BJ (cell line): ENCODE measurements at regions of chr21 and their contacts with region 1.

Region 1: DNA sequence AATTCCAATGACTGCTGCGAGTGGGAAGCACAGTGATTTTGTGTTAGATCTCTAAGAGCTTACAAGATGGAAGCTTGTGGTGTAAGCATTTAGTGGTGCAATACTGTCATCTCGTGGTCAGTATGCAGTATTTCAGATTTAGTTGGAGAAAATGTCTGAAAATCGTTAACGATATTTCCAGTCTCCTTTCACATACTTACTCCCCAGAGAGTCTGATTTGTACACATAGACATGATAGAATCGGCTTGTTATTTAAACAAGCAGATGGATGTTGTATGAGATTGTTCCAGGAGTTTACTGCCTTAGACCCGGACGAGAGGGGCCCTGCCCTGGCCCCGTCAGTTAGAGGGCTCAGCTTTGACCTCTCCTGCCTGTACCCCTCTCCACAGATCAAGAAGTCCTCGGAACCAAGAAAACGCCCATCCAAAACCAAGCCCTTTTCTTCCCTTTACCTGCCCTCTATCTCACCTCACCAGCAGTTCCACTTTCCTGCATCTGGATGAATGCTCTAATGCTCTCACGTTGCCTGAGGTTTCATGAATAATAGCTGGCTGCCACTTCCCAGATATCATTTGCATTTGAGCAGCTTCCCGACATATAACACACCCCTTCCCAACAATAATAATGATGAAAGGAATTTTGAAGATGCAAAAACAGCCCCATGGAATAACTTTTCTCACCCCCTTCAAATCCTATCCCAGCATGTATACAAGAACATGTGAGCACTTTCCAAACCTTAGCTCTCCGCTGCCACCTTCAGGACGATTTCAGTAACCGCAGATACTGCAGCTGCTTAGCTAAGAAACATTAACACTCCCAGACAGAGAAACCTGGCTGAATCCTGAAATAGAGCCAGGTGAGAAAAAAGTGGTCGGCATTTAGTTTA is 247.3 kb downstream of the LTN1 start:
- DNase-seq: peak; percentile 45
- H3K4me3 ChIP-seq: peak overlapping the region; percentile 24
- H3K27me3 ChIP-seq: no peaks in the 10 kb centered on the region
- CTCF ChIP-seq: peak; percentile 83

Region 2: DNA sequence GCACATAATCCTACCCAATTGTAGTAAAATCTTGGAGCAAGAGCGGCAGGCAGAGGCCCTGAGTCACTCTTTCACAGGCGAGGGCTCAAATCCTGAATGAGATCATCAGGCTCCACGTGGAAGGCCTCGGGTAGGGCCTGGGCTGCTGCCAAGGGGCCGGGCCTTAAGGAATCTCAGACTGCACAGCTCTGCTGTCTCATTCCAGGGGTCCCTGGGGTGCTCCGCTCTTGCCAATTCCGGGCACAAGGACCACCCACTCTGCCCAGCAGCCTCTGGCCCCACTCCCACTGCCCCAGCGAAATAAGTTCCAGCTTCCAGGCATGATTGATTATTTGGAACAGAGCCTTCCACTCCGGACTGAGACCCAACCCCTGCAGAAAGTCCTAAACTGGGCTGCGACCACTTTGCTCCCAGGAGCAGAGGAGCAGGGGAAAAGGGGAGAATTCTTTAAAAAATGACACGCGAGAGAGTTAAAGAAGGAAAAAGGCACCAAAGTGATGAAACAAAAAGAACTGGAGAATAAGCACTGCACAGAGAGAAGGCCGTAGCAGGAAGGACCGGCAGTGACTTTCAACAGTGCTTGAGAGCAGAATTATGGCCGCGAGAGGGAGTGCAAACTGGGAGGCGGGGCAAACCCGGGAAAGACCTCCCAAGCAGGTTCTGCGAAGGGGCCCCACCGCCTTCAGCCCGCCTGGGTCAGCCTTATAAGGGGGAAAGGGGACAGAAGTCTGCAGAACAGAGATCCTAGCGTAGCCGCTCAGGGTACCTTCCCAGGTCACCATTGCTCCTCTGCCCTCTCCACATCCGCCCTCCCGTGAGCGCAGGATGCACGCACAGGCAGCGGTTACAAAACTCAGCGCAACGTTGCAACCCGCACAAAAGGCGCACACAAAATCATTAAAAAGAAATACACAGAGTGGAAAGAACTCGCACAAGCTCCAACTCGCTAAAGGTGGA is 1902.1 kb before region 1 on chr21:
- CTCF ChIA-PET with region 1: interaction called, 30 read pairs
- POLR2A ChIA-PET with region 1: interaction called, 3 read pairs
- DNase-seq: peak; percentile 70
- H3K4me3 ChIP-seq: peak overlapping the region; percentile 96
- H3K27me3 ChIP-seq: no peaks in the 10 kb centered on the region
- CTCF ChIP-seq: no peak; the same call in 1 of the 2 replicates

Region 3: DNA sequence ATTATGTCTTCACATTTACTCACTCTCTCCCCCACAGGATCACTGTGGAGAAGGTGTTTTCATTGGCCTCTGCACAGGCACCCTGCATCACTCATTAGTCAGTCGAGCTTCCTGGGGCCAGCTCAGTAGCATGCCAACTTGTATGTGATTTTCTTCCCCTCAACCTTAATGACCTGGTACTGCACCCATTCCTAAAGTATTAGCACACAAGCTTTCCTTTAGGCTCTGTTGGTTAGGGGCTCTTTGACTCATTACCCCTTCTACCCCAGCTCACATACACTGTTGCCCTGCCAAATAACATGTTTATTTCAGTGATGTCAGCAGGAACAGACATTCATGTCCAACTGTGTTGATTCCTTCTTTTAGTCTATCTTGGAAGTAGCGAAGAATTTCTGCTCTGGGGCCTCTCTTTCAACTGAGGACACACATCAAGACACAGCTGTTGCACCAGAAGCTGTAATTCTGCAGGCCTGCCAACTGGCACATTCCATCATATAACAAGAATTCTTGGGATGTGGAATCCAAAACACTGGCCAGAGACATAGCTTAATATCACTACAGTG is 1175.0 kb before region 1 on chr21:
- CTCF ChIA-PET with region 1: interaction called, 19 read pairs
- POLR2A ChIA-PET with region 1: no interaction called
- DNase-seq: peak; percentile 76
- H3K4me3 ChIP-seq: no peak overlapping the region
- H3K27me3 ChIP-seq: no peaks in the 10 kb centered on the region
- CTCF ChIP-seq: no peak

Region 4: DNA sequence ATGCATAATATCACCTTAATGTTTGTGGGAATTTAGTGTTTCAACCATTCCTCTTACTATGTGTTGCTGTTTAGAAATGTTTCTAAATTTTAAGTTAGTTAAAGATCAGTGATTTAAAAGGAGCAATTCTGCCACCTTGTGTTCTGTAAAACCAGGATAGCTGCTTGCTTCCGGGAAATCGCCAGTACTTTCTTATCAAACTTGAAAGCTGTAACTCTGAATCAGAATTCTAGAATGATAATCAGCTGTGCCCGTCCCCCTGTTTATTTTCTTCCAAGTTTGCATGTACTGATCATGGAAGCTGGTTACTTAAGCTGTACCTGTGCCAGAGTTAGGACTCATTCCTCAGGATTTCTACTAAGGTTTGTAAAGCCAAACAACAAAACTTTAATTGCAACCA is 409.1 kb before region 1 on chr21:
- CTCF ChIA-PET with region 1: interaction called, 26 read pairs
- POLR2A ChIA-PET with region 1: no interaction called
- DNase-seq: peak; percentile 55
- H3K4me3 ChIP-seq: no peak overlapping the region
- H3K27me3 ChIP-seq: no peaks in the 10 kb centered on the region
- CTCF ChIP-seq: peak; percentile 49

Region 5: DNA sequence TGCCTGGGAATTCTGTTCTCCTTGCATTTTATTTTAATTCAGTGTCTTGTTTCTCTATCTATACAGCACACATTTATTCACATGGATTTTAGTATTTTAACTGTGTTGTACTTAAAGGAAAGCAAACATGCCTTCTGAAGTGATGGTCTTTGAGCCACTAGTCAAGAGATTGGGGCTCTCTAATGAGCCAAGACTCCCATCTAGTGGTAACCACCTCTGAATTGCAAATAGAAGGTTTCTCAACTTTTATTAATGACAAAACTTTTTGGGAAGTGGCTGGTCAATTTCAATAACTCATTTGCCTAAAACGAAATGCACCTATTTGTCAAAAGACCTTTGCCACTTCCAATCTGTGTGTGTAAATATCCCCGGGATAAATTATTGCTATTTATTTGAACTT is 47.7 kb after region 1 on chr21:
- CTCF ChIA-PET with region 1: interaction called, 40 read pairs
- POLR2A ChIA-PET with region 1: no interaction called
- DNase-seq: no peak
- H3K4me3 ChIP-seq: no peak overlapping the region
- H3K27me3 ChIP-seq: no peaks in the 10 kb centered on the region
- CTCF ChIP-seq: peak; percentile 59

Region 6: DNA sequence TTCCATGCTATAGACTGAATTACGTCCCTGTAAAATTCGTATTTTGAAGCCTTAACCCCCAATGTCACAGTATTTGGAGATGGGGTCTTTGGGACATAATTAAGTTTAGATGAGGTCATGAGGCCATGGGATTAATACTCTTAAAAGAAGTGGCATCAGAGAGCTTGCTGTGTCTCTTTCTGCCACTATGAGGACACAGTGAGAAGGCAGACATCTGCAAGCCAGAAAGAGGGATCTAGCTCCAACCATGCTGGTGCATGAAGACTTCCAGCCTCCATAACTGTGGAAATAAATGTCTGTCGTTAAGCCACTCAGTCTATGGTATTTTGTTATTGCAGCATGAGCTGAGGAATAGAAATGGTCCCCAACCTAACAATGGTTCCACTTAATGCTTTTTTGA is 148.3 kb after region 1 on chr21:
- CTCF ChIA-PET with region 1: no interaction called
- POLR2A ChIA-PET with region 1: no interaction called
- DNase-seq: no peak
- H3K4me3 ChIP-seq: no peak overlapping the region
- H3K27me3 ChIP-seq: peaks cover 2% of the 10 kb centered on the region; the same call in 1 of the 2 replicates
- CTCF ChIP-seq: no peak